Activated naive CD4-positive, alpha-beta T cell treated with anti-CD3 and anti-CD28 coated beads for 36 hours (primary cell): ENCODE measurements at regions of chr1 and their contacts with region 1.

Region 1: GRCh38 chr1:28648474-28649198 is at the start of gene RNU11:
- DNase-seq: peak; percentile 92
- H3K4me3 Mint-ChIP-seq: peak within 1 kb of the TSS; percentile 92
- H3K27ac Mint-ChIP-seq: peak within 1 kb of the TSS; percentile 99
- H3K4me1 Mint-ChIP-seq: peaks cover 28% of the 10 kb centered on the region
- H3K27me3 Mint-ChIP-seq: no peaks in the 10 kb centered on the region
- total RNA-seq, gene RNU11: not detected

Region 2: GRCh38 chr1:28552758-28553663 is 95.6 kb before region 1 on chr1 and contains the start of gene TRNAU1AP:
- CTCF ChIA-PET with region 1: no interaction called
- intact Hi-C with region 1: loop called (anchors 1 kb)
- DNase-seq: peak; percentile 99
- H3K4me3 Mint-ChIP-seq: peak within 1 kb of the TSS; percentile 94
- H3K27ac Mint-ChIP-seq: peak within 1 kb of the TSS; percentile 97
- H3K4me1 Mint-ChIP-seq: peaks cover 19% of the 10 kb centered on the region
- H3K27me3 Mint-ChIP-seq: no peaks in the 10 kb centered on the region
- total RNA-seq, gene TRNAU1AP: 36.7 to 39.4 TPM

Region 3: GRCh38 chr1:28668191-28668955 is 19.7 kb after region 1 on chr1 and contains the start of gene GMEB1:
- CTCF ChIA-PET with region 1: interaction called, 5 read pairs
- intact Hi-C with region 1: loop called (anchors 1 kb)
- DNase-seq: peak; percentile 87
- H3K4me3 Mint-ChIP-seq: peak within 1 kb of the TSS; percentile 86
- H3K27ac Mint-ChIP-seq: peak within 1 kb of the TSS; percentile 96
- H3K4me1 Mint-ChIP-seq: peaks cover 11% of the 10 kb centered on the region
- H3K27me3 Mint-ChIP-seq: no peaks in the 10 kb centered on the region
- total RNA-seq, gene GMEB1: 15.8 to 16.3 TPM

Region 4: GRCh38 chr1:28736450-28737306 is 88.0 kb after region 1 on chr1 and contains the start of gene YTHDF2:
- CTCF ChIA-PET with region 1: interaction called, 11 read pairs
- intact Hi-C with region 1: loop called (anchors 1 kb)
- DNase-seq: peak; percentile 99
- H3K4me3 Mint-ChIP-seq: peak within 1 kb of the TSS; percentile 96
- H3K27ac Mint-ChIP-seq: peak within 1 kb of the TSS; percentile 92
- H3K4me1 Mint-ChIP-seq: peaks cover 33% of the 10 kb centered on the region
- H3K27me3 Mint-ChIP-seq: no peaks in the 10 kb centered on the region
- total RNA-seq, gene YTHDF2: 64.9 to 66.1 TPM